Activated CD4-positive, alpha-beta T cell treated with anti-CD3 and anti-CD28 coated beads for 36 hours (primary cell): ENCODE measurements at regions of chr12 and their contacts with region 1.

Region 1: GRCh38 chr12:6965026-6965661 is 5.3 kb downstream of the PHB2 start:
- DNase-seq: peak; percentile 95
- ATAC-seq: peak; percentile 48
- H3K4me3 Mint-ChIP-seq: no peak overlapping the region
- H3K27ac Mint-ChIP-seq: peak overlapping the region; percentile 94
- H3K4me1 Mint-ChIP-seq: peaks cover 76% of the 10 kb centered on the region
- H3K27me3 Mint-ChIP-seq: no peaks in the 10 kb centered on the region

Region 2: GRCh38 chr12:6723607-6724396 is 241.3 kb before region 1 on chr12 and contains the start of gene COPS7A:
- CTCF ChIA-PET with region 1: interaction called, 3 read pairs
- POLR2A ChIA-PET with region 1: no interaction called
- intact Hi-C with region 1: loop called in 1 of 2 experiments (anchors 1 kb)
- DNase-seq: peak; percentile 98
- ATAC-seq: peak; percentile 96
- H3K4me3 Mint-ChIP-seq: peak within 1 kb of the TSS; percentile 80
- H3K27ac Mint-ChIP-seq: peak within 1 kb of the TSS; percentile 97
- H3K4me1 Mint-ChIP-seq: peaks cover 18% of the 10 kb centered on the region
- H3K27me3 Mint-ChIP-seq: no peaks in the 10 kb centered on the region
- total RNA-seq, gene COPS7A: 38.3 to 41.6 TPM

Region 3: GRCh38 chr12:6867413-6868210 is 97.5 kb before region 1 on chr12 and contains the start of gene TPI1:
- CTCF ChIA-PET with region 1: interaction called, 5 read pairs
- POLR2A ChIA-PET with region 1: interaction called, 3 read pairs
- intact Hi-C with region 1: loop called (anchors 1 to 5 kb)
- DNase-seq: peak; percentile 91
- ATAC-seq: peak; percentile 68
- H3K4me3 Mint-ChIP-seq: peak within 1 kb of the TSS; percentile 93
- H3K27ac Mint-ChIP-seq: peak within 1 kb of the TSS; percentile 95
- H3K4me1 Mint-ChIP-seq: peaks cover 47% of the 10 kb centered on the region
- H3K27me3 Mint-ChIP-seq: no peaks in the 10 kb centered on the region
- total RNA-seq, gene TPI1: 1,824 to 2,753 TPM

Region 4: GRCh38 chr12:6904280-6905278 is 60.6 kb before region 1 on chr12 and contains the start of gene LRRC23:
- CTCF ChIA-PET with region 1: no interaction called
- POLR2A ChIA-PET with region 1: no interaction called
- intact Hi-C with region 1: loop called in 1 of 2 experiments (anchors 1 kb)
- DNase-seq: peak; percentile 99
- ATAC-seq: peak; percentile 97
- H3K4me3 Mint-ChIP-seq: no peak within 1 kb of the TSS
- H3K27ac Mint-ChIP-seq: no peak within 1 kb of the TSS
- H3K4me1 Mint-ChIP-seq: peaks cover 14% of the 10 kb centered on the region
- H3K27me3 Mint-ChIP-seq: no peaks in the 10 kb centered on the region
- total RNA-seq, gene LRRC23: 6.4 to 7.0 TPM

Region 5: GRCh38 chr12:6944381-6945186 is 20.6 kb before region 1 on chr12:
- CTCF ChIA-PET with region 1: interaction called, 237 read pairs
- POLR2A ChIA-PET with region 1: interaction called, 142 read pairs
- intact Hi-C with region 1: loop called (anchors 1 kb)
- DNase-seq: peak; percentile 94
- ATAC-seq: peak; percentile 54
- H3K4me3 Mint-ChIP-seq: peak overlapping the region; percentile 81
- H3K27ac Mint-ChIP-seq: peak overlapping the region; percentile 97
- H3K4me1 Mint-ChIP-seq: peaks cover 59% of the 10 kb centered on the region
- H3K27me3 Mint-ChIP-seq: no peaks in the 10 kb centered on the region

Region 6: DNA sequence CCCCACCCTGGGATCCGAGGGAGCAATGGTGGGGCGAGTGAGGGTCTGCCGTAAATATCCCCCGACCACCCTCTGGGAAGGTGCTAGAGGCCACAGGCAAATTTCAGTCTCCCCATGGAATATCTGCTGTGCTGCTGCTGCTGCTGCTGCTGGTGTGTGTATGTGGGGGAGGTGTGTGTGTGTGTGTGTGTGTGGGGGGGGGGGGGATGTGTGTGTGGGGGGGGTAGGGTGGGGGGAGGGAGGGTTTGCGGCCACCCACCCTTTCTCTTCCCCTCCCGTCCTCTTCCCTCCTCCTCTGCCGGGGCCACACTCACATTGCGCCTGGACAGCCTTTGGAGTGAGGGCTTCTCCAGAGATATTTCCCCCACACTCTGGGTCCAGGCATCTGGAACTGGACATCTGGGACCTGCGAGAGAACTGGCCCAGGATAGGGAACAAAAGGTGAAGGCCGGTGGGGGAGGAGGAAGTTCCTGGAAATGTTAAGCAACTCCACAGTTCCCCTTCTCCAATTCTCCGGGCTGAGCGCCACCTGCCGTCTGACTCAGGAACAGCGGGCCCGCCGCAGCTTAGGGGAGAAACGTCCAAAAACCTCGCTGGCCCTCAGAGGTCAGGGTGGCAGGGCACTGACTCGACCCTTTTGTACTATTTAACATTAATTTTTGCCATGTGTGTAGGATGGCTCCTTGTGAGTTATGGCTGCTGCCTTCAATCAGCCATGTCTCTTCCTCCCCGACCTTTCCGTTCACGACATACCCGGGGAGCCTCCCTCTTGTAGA is 143.8 kb after region 1 on chr12 and contains the start of gene C1RL:
- CTCF ChIA-PET with region 1: interaction called, 5 read pairs
- POLR2A ChIA-PET with region 1: interaction called, 3 read pairs
- intact Hi-C with region 1: loop called (anchors 1 to 2 kb)
- DNase-seq: peak; percentile 90
- ATAC-seq: peak; percentile 33
- H3K4me3 Mint-ChIP-seq: peak within 1 kb of the TSS; percentile 92
- H3K27ac Mint-ChIP-seq: peak within 1 kb of the TSS; percentile 94
- H3K4me1 Mint-ChIP-seq: peaks cover 43% of the 10 kb centered on the region
- H3K27me3 Mint-ChIP-seq: no peaks in the 10 kb centered on the region
- total RNA-seq, gene C1RL: 17.3 to 18.9 TPM

Region 7: GRCh38 chr12:7180685-7181084 is 215.5 kb after region 1 on chr12:
- CTCF ChIA-PET with region 1: no interaction called
- POLR2A ChIA-PET with region 1: no interaction called
- intact Hi-C with region 1: no loop called
- DNase-seq: no peak
- ATAC-seq: no peak
- H3K4me3 Mint-ChIP-seq: no peak overlapping the region
- H3K27ac Mint-ChIP-seq: no peak overlapping the region
- H3K4me1 Mint-ChIP-seq: no peaks in the 10 kb centered on the region
- H3K27me3 Mint-ChIP-seq: peaks cover 5% of the 10 kb centered on the region